ENCODE measurements at regions of chr10 and their contacts with region 1.

Region 1: GRCh38 chr10:107701943-107702342 is 537.4 kb upstream of the SORCS1 start:
- DNase-seq: no peak
- ATAC-seq: no peak
- H3K4me3 ChIP-seq: no peak overlapping the region
- H3K27ac ChIP-seq: no peak overlapping the region
- H3K4me1 ChIP-seq: no peaks in the 10 kb centered on the region
- H3K27me3 ChIP-seq: peaks cover 0 to 1% of the 10 kb centered on the region in 2 donors

Region 2: GRCh38 chr10:107718864-107719263 is 16.9 kb after region 1 on chr10:
- intact Hi-C with region 1: loop called in 1 of 2 experiments (anchors 1 kb)
- DNase-seq: no peak
- ATAC-seq: no peak
- H3K4me3 ChIP-seq: no peak overlapping the region
- H3K27ac ChIP-seq: no peak overlapping the region
- H3K4me1 ChIP-seq: no peaks in the 10 kb centered on the region
- H3K27me3 ChIP-seq: no peaks in the 10 kb centered on the region